ENCODE measurements at regions of chr2 and their contacts with region 1.

Region 1: DNA sequence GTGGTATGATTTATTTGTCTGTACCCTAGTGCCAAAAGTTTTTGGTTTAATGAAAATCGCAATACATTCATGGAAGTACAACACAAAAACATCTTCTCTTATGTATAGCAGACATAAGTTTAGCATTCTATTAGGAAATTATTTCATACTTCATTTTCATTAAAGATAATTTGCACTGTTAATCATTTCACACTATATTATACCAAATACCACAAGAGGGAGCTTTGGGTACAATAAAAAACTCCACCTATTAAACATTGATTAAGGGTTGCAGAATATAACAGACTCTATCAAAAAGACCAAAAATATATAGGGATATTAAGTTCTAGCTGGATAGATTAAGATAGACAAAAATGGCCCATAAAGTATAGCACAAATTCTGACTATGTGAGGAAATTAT is 79.0 kb downstream of the SLC66A3 start:
- DNase-seq: no peak
- ATAC-seq: no peak
- H3K4me3 ChIP-seq: no peak overlapping the region
- H3K27ac ChIP-seq: no peak overlapping the region
- H3K4me1 ChIP-seq: no peaks in the 10 kb centered on the region
- H3K27me3 ChIP-seq: no peaks in the 10 kb centered on the region

Region 2: DNA sequence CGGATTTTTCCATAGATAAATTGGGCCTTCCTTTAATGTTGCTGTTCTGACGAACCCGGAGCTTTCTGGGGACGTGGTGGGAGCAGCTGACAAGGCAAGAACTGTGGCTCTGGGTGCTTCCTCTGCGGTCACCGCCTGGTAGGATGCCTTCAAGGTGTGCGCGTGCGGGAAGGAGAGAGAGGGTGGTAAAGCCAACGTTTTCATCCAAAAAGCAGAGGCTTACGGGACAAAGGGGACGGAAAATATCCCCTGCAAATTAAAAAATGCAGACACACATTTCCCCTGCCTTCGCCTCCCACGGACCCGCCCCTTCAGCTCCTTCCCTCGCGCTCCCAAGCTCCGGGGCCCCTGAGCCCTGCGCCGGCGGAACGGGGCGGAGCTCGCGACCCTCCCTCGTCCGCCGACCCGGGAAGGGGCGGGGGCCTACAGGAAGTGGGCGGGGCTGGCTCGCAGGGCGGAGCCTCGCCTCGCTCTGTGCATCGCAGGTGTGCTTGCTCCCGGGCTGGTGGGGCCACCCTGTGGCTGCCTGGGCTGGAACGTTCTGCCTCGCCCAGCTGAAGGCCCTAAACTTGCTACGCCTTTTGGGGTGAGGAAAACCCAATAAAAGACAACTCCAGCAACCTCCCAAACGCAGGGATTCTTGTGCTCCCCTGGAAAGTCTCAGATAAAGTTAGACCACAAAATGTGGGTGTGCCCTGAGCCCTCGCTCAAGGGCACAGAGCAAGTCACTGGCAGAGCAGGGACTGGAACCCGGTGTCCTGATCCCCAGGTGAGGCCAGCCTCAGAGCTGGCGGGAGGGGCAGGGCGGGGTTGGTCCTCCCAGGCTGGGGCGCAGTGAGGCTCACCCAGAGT is 104.5 kb before region 1 on chr2:
- intact Hi-C with region 1: loop called in 1 of 4 experiments (anchors 10 kb)
- DNase-seq: peak; percentile 56 to 81 (median 81)
- ATAC-seq: peak; percentile 51 to 58
- H3K4me3 ChIP-seq: peak overlapping the region; percentile 34
- H3K27ac ChIP-seq: no peak overlapping the region
- H3K4me1 ChIP-seq: no peaks in the 10 kb centered on the region
- H3K27me3 ChIP-seq: no peaks in the 10 kb centered on the region

Region 3: GRCh38 chr2:11154923-11155380 is 79.4 kb before region 1 on chr2:
- intact Hi-C with region 1: no loop called
- DNase-seq: peak; percentile 98 to 100 (median 100)
- ATAC-seq: peak; percentile 93 to 95
- H3K4me3 ChIP-seq: peak overlapping the region; percentile 76
- H3K27ac ChIP-seq: peak overlapping the region; percentile 95
- H3K4me1 ChIP-seq: no peaks in the 10 kb centered on the region
- H3K27me3 ChIP-seq: no peaks in the 10 kb centered on the region

Region 4: GRCh38 chr2:11344342-11344955 is 110.1 kb after region 1 on chr2 and contains the start of gene ROCK2:
- intact Hi-C with region 1: loop called in 2 of 4 experiments (anchors 10 kb)
- DNase-seq: peak; percentile 88 to 96 (median 95)
- ATAC-seq: peak; percentile 80 to 88
- H3K4me3 ChIP-seq: peak within 1 kb of the TSS; percentile 98
- H3K27ac ChIP-seq: peak within 1 kb of the TSS; percentile 100
- H3K4me1 ChIP-seq: no peaks in the 10 kb centered on the region
- H3K27me3 ChIP-seq: no peaks in the 10 kb centered on the region
- total RNA-seq, gene ROCK2: 40.2 to 60.7 (median 40.9) TPM

Region 5: GRCh38 chr2:11411768-11412448 is 177.6 kb after region 1 on chr2:
- intact Hi-C with region 1: loop called (anchors 1 to 5 kb)
- DNase-seq: peak in 2 of 3 donors; percentile 56 to 69
- ATAC-seq: peak; percentile 70 to 73
- H3K4me3 ChIP-seq: peak overlapping the region; percentile 37
- H3K27ac ChIP-seq: no peak overlapping the region
- H3K4me1 ChIP-seq: no peaks in the 10 kb centered on the region
- H3K27me3 ChIP-seq: no peaks in the 10 kb centered on the region

Region 6: DNA sequence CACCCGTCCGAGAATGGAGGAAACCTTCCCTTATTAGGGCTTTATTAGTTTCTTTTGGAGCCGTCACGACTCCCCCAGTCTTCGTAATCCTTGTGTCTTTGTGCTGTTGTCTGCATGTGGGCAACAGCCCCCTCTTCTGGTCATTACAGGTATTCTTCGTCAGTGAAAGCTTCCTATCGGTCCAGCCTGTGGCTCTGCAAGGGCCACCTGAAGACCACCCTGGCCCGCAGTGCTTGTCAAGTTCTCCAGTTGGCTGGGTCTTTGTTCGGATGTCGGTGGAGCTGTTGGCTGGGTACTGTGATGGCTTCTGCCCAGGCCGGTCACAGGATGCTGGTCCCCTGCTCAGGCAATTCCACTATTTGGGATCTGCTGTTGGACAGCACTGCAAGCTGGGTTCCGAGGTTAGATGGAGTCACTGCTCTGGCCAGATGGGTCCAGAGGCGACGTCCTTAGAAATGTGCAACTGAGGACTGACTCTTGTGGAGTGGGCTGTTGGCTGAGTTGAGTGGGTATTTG is 212.5 kb after region 1 on chr2:
- intact Hi-C with region 1: loop called in 1 of 4 experiments (anchors 10 kb)
- DNase-seq: peak; percentile 50 to 53 (median 51)
- ATAC-seq: peak; percentile 82 to 84
- H3K4me3 ChIP-seq: no peak overlapping the region
- H3K27ac ChIP-seq: no peak overlapping the region
- H3K4me1 ChIP-seq: no peaks in the 10 kb centered on the region
- H3K27me3 ChIP-seq: no peaks in the 10 kb centered on the region

Region 7: GRCh38 chr2:11515490-11515981 is 281.2 kb after region 1 on chr2:
- intact Hi-C with region 1: no loop called
- DNase-seq: no peak
- ATAC-seq: no peak
- H3K4me3 ChIP-seq: no peak overlapping the region
- H3K27ac ChIP-seq: no peak overlapping the region
- H3K4me1 ChIP-seq: no peaks in the 10 kb centered on the region
- H3K27me3 ChIP-seq: no peaks in the 10 kb centered on the region

Measured in right cardiac atrium (tissue), 5 donors.